HEK293 (cell line): ENCODE measurements at regions of chr16 and their contacts with region 1.

Region 1: GRCh38 chr16:66728117-66728787 is 23.2 kb downstream of the DYNC1LI2 start:
- H3K4me3 ChIP-seq: no peak overlapping the region
- H3K27ac ChIP-seq: no peak overlapping the region
- H3K4me1 ChIP-seq: no peaks in the 10 kb centered on the region
- CTCF ChIP-seq: peak; percentile 34

Region 2: GRCh38 chr16:66478733-66479511 is 249.3 kb before region 1 on chr16:
- CTCF ChIA-PET with region 1: no interaction called
- POLR2A ChIA-PET with region 1: no interaction called
- H3K4me3 ChIP-seq: no peak overlapping the region
- H3K27ac ChIP-seq: no peak overlapping the region
- H3K4me1 ChIP-seq: peaks cover 6% of the 10 kb centered on the region
- CTCF ChIP-seq: peak; percentile 84

Region 3: DNA sequence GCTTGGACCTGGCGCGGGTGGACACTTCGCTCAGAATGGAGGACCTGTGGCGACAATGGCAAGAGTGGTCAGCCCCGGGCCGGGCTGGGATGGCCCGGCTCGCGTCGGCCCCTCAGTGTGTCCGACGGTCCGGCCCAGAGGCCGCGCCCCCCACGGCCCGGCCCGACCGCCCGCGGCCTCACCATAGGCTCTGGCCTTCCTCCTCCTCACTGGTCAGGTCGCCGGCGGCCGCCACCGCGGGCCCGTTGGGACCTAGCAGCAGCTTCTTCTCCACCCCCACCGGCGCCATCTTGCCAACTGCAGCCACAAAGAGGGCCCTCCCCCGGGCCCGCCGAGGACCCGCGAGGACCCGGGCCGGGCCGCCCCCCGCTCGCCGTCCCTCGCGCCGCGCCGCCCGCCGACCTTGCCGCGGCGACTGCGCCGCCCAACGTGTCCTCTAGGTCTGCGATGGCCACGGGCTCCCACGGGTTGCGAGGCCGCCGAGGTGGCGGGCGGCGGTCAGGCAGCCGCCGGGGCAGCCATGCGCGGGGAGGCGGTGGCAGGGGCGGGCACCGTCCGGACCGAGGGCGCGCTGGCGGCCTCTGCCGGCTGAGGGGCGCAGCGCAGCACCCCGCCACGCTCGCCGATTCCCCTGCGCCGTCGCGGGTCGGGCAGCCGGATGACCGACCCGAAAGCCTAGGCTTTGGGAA is 23.2 kb after region 1 on chr16 and contains the start of gene DYNC1LI2:
- CTCF ChIA-PET with region 1: interaction called, 12 read pairs
- POLR2A ChIA-PET with region 1: interaction called, 3 read pairs
- H3K4me3 ChIP-seq: peak within 1 kb of the TSS; percentile 87
- H3K27ac ChIP-seq: peak within 1 kb of the TSS; percentile 98
- H3K4me1 ChIP-seq: peaks cover 6% of the 10 kb centered on the region
- CTCF ChIP-seq: 0 out of 2 replicates have a peak, but pooled peaks have one; percentile 32

Region 4: DNA sequence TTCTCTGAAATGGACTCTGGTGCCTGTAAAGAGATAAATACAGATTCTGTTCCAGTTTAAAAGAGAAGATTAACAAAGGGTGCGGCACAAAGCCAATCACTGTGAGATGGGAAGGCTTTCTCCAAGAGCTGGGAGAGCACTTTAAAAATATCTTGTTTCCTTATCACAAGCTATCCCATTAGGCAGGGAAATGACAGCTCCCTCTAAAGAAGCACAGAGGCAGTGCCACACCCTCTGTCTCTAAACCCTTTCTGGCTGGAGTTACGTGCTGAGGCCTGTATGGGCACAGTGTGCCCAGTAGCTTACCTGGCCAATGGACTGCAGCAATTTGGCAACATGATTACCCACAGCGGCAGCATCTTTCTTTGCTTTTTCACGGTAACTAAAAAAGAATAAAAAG is 82.1 kb after region 1 on chr16:
- CTCF ChIA-PET with region 1: no interaction called
- POLR2A ChIA-PET with region 1: no interaction called
- H3K4me3 ChIP-seq: no peak overlapping the region
- H3K27ac ChIP-seq: no peak overlapping the region
- H3K4me1 ChIP-seq: no peaks in the 10 kb centered on the region
- CTCF ChIP-seq: no peak

Region 5: DNA sequence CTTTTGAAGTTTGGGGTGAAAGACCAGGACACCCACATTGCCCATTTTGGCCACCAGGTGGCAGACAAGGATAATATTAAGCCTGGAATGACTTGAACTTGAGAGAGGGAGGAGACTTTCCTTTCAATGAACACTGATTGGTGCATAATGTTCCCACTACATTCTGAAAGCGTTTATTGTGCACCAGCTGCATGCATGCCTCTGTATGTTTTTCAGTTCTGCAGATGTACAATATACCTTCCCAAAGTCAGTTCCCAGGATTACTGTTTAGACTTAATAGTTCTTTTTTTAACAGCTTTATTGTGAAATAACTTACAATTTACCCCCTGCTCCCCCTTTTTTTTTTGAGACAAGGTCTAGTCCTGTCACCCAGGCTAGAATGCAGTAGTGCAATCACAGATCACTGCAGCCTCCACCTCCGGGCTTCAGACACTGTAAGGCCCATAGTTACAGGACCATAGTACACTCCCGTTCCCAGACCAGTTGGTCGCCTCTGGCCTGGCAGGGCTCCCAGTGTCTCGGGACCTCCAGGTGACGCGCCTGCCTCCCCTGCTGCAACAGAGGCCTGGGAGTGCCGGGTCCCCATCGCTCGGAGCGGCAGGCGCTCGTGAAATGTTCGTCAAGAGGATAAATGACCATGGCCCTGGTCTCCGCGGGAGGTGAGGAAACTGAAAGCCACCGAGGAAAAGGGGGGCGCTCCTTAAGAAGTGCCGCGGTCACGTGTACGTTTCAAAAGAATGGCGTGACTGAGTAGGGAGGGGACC is 219.2 kb after region 1 on chr16:
- CTCF ChIA-PET with region 1: no interaction called
- POLR2A ChIA-PET with region 1: no interaction called
- H3K4me3 ChIP-seq: no peak overlapping the region
- H3K27ac ChIP-seq: no peak overlapping the region
- H3K4me1 ChIP-seq: no peaks in the 10 kb centered on the region
- CTCF ChIP-seq: peak; percentile 62